ENCODE measurements at regions of chr15 and their contacts with region 1.

Region 1: DNA sequence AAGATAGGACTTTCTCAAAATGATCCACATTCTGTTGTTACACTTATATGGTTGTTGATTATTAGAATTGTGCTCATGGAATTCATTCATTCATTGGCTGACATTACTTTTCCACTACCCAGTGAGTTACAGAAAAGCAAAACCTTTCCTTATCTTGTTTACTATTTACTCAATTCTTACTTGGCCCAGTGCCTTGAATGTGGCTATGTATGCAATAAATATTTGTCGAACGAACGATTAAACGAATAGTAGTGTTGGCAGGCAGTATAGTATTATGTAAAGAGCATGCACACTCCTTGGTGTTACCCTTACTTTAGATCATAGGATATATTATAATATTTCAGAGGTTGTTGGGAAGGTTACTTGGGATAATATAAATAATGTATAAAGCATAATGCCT is 31.0 kb downstream of the CTDSPL2 start:
- DNase-seq: no peak
- H3K4me3 ChIP-seq: no peak overlapping the region
- H3K27ac ChIP-seq: no peak overlapping the region
- H3K4me1 ChIP-seq: no peaks in the 10 kb centered on the region
- CTCF ChIP-seq: no peak

Region 2: DNA sequence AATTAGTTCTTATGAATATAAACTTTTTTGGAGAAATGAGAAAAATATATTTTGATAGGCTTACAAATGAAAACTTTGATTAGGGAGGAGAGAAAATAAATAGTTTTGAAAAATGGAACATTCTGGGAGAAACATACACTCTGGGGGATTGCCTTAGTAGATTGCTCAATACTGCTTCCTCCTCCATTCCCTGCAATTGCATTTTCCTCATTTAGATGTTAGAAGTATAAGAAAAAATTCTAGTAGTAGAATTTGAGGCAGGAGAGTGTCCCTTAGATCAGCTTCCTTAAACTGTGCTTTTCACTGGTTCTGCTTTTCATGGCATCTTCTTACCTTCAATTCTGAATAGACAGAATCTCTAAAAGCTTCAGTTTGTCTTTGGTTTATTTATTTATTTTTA is 77.2 kb before region 1 on chr15:
- CTCF ChIA-PET with region 1: no interaction called
- POLR2A ChIA-PET with region 1: no interaction called
- intact Hi-C with region 1: no loop called
- DNase-seq: no peak
- H3K4me3 ChIP-seq: no peak overlapping the region
- H3K27ac ChIP-seq: no peak overlapping the region
- H3K4me1 ChIP-seq: peaks cover 8% of the 10 kb centered on the region
- CTCF ChIP-seq: no peak

Region 3: DNA sequence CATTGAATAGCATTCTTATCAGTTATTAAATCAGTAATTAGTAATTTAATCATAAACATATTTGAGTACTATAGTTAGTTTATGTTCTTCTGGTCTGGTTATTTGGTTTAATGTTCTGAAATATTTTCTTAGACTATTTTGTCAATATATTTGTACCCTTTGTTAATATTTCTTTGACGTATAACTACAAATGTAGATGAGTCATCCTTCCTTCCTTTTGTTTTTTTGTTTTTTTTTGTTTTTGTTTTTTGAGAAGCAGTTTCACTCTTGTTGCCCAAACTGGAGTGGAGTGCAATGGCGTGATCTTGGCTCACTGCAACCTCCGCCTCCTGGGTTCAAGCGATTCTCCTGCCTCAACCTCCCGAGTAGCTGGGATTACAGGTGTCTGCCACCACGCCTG is 61.1 kb after region 1 on chr15:
- CTCF ChIA-PET with region 1: no interaction called
- POLR2A ChIA-PET with region 1: interaction called, 14 read pairs
- intact Hi-C with region 1: no loop called
- DNase-seq: no peak
- H3K4me3 ChIP-seq: no peak overlapping the region
- H3K27ac ChIP-seq: no peak overlapping the region
- H3K4me1 ChIP-seq: no peaks in the 10 kb centered on the region
- CTCF ChIP-seq: no peak

Measured in OCI-LY7 (cell line).